Mammary epithelial cell (primary cell): ENCODE measurements at regions of chr4 and their contacts with region 1.

Region 1: GRCh38 chr4:139619644-139620043 is 46.0 kb upstream of the MGST2 start:
- DNase-seq: peak; percentile 30
- H3K4me3 ChIP-seq: no peak overlapping the region
- H3K27ac ChIP-seq: no peak overlapping the region
- H3K4me1 ChIP-seq: no peaks in the 10 kb centered on the region
- H3K27me3 ChIP-seq: no peaks in the 10 kb centered on the region
- CTCF ChIP-seq: peak; percentile 61 to 69

Region 2: DNA sequence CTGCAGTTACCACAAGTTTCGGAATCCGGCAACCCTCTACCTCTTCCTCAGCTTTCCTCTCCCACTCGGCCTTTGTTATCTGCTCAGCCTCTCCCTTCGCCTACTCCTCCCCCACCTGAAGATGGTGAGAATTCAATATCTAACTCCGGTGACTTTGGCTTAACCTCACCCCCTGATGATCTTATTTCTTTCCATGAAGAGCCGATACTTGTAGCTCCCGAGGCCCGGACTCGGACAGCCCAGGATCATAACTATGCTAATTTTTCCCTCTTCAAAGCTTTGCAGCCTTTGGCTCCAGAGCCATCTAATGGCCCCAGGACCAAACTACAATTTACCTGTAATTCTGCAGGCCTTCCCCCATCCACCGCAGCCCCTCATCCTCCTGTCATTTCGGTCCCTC is 14.0 kb after region 1 on chr4:
- CTCF ChIA-PET with region 1: no interaction called
- dilution Hi-C with region 1: no loop called
- in situ Hi-C with region 1: no loop called
- intact Hi-C with region 1: loop called (anchors 1 kb)
- DNase-seq: no peak
- H3K4me3 ChIP-seq: no peak overlapping the region
- H3K27ac ChIP-seq: no peak overlapping the region
- H3K4me1 ChIP-seq: no peaks in the 10 kb centered on the region
- H3K27me3 ChIP-seq: no peaks in the 10 kb centered on the region
- CTCF ChIP-seq: peak; percentile 23 to 51